ENCODE measurements at regions of chr1 and their contacts with region 1.

Region 1: GRCh38 chr1:2148691-2149090 is 45.9 kb downstream of the FAAP20 start:
- DNase-seq: no peak
- ATAC-seq: no peak
- H3K4me3 ChIP-seq: no peak overlapping the region
- H3K27ac ChIP-seq: no peak overlapping the region
- H3K4me1 ChIP-seq: no peaks in the 10 kb centered on the region
- H3K27me3 ChIP-seq: peaks cover 2% of the 10 kb centered on the region; the same call in 1 of the 2 replicates
- CTCF ChIP-seq: no peak
- POLR2A ChIP-seq: no peak
- RAD21 ChIP-seq: no peak

Region 2: DNA sequence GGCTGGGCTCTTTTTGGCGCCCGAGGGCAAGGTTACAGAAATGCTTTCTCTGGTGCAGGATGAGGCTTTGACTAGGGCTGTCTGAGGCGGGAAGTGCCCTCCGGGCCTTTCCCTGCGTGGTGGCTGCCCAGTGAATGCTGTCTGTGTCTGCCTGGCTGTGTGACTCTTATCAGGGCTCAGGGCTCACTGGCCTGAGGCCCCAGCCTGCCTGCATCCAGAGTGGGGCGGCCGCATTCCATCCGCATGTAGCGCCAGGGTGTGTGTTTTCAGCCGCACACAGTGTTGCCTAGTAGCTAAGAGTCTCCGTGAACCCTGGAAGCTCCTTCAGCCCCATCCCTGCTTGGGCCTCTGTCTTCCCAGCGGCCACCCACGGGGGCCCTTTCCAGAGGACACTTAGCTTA is 13.2 kb before region 1 on chr1:
- CTCF ChIA-PET with region 1: interaction called, 20 read pairs
- POLR2A ChIA-PET with region 1: no interaction called
- dilution Hi-C with region 1: no loop called
- in situ Hi-C with region 1: no loop called
- intact Hi-C with region 1: no loop called
- DNase-seq: peak; percentile 85
- ATAC-seq: peak; percentile 22
- H3K4me3 ChIP-seq: no peak overlapping the region
- H3K27ac ChIP-seq: peak overlapping the region; percentile 15; the same call in 1 of the 2 replicates
- H3K4me1 ChIP-seq: peaks cover 16% of the 10 kb centered on the region
- H3K27me3 ChIP-seq: no peaks in the 10 kb centered on the region; the same call in 1 of the 2 replicates
- CTCF ChIP-seq: peak; percentile 32
- POLR2A ChIP-seq: peak; percentile 78
- RAD21 ChIP-seq: 0 out of 2 replicates have a peak, but pooled peaks have one; percentile 1